ENCODE measurements at regions of chr3 and their contacts with region 1.

Region 1: GRCh38 chr3:52056968-52057805 is 816 bp upstream of the DUSP7 start:
- DNase-seq: peak; percentile 98
- CTCF ChIP-seq: no peak

Region 2: DNA sequence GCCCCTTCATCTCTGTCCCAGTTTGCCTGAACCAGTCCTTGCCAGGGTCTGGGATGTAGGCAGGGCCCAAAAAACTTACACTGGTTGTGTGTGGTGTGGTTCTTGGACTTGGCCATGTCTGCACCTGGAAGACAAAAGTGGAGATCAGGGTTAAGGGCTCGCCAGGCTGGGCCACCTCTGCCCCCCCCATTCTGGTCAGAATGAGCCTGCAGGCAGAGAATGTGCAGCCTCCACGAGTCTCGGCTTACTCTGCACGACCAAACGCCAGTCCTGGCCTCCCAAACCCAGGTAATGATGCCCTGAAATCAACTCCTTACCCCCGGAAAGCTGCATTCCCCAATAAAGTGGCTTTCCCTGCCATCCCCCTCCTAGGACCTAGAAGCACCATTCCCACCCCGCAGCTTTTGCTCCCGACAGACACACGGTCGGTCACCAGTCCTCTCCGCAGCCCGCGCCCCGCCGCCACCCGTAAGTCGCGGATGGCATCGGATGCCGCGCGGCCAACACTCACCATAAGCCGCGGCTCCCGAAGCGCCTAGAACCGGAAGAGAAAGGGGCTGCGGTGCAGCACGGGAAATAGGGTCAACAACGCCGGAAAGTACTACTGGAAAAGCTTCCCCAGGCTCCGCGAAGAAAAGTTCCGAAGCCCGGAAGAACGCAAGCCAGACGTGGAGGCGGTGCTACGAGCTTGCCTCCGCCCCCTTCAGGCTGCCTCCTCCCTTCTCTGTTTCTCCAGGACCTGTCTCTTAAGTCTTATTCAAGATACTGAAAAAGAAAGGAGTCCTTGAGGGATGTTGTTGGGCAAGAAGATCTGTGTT is 61.6 kb before region 1 on chr3 and contains the start of gene RPL29:
- CTCF ChIA-PET with region 1: interaction called, 76 read pairs
- POLR2A ChIA-PET with region 1: interaction called, 5 read pairs
- DNase-seq: peak; percentile 94
- CTCF ChIP-seq: no peak

Region 3: DNA sequence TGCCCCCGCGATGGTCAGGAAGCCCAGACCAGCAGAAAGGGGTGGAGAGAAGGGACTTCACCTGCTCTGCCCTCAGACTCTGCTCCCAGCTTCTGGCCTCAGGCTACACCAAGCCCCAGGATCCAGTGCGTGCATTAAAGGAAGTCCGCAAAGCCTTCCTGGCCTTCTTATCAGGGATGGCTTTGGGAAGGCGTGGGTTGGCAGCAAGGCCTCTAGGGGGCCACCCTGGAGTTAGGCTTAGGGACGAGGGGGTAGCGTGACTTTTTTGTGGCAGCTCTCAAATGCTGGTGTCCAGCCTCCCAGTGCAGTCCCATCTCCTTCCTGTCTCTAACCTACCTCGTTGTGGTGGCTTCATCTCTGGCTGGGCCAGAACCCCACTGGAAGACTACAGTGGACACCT is 42.6 kb before region 1 on chr3:
- CTCF ChIA-PET with region 1: interaction called, 26 read pairs
- POLR2A ChIA-PET with region 1: no interaction called
- DNase-seq: no peak
- CTCF ChIP-seq: no peak

Region 4: GRCh38 chr3:52032702-52033408 is 24.3 kb before region 1 on chr3:
- CTCF ChIA-PET with region 1: interaction called, 15 read pairs
- POLR2A ChIA-PET with region 1: no interaction called
- DNase-seq: no peak
- CTCF ChIP-seq: no peak

Region 5: GRCh38 chr3:52068055-52068571 is 10.9 kb after region 1 on chr3:
- CTCF ChIA-PET with region 1: interaction called, 16 read pairs
- POLR2A ChIA-PET with region 1: no interaction called
- DNase-seq: no peak
- CTCF ChIP-seq: no peak

Region 6: GRCh38 chr3:52123106-52123725 is 66.0 kb after region 1 on chr3:
- CTCF ChIA-PET with region 1: interaction called, 123 read pairs
- POLR2A ChIA-PET with region 1: interaction called, 3 read pairs
- DNase-seq: peak; percentile 88
- CTCF ChIP-seq: peak; percentile 98

Region 7: DNA sequence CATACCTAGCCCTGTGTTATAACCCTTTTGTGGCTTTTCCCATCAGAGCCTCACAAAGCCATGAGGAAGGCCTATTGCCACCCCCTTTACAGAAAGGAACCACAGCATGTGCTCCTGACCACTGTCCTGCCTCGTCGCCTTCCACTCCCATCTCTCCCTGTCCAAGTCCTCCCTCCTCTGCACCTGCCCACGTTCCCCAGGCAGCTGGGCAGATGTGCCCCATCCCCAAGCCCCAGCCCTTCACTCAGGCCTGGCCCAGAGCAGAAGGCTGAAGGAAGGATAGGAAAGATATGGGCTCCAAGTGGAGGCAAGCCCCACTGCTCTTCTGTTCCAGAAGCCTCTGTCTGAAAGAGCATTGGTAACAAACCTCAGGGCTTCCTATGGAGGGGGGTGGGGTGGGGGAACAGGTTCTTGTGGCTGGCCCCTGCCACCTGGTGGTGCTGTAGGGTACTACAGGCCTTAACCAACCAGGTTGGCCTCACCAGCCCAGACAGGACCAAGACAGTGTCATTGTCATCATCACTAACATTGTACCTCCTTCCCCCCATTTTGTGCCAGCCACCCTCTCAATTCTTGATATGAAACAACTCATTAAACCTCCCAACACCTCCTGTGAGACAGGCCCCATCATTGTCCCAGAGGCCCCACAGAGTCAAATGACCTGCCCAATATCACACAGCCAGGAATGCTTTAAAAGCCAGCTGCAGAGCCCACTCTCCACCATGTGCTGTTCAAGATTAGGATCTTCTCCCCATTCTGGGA is 87.0 kb after region 1 on chr3:
- CTCF ChIA-PET with region 1: interaction called, 86 read pairs
- POLR2A ChIA-PET with region 1: no interaction called
- DNase-seq: peak; percentile 88
- CTCF ChIP-seq: peak; percentile 95

Measured in GM10248 (cell line).